Ovary (tissue), 10 donors: ENCODE measurements at regions of chr15 and their contacts with region 1.

Region 1: GRCh38 chr15:68154923-68155559 is 50.1 kb downstream of the CALML4 start:
- DNase-seq: peak in 4 of 5 donors; percentile 35 to 70 (median 52)
- H3K4me3 ChIP-seq: no peak overlapping the region
- H3K27ac ChIP-seq: no peak overlapping the region
- H3K4me1 ChIP-seq: peaks cover 4% of the 10 kb centered on the region
- H3K27me3 ChIP-seq: no peaks in the 10 kb centered on the region
- CTCF ChIP-seq: peak; percentile 55 to 88 (median 82)
- EP300 ChIP-seq: no peak
- POLR2A ChIP-seq: no peak

Region 2: DNA sequence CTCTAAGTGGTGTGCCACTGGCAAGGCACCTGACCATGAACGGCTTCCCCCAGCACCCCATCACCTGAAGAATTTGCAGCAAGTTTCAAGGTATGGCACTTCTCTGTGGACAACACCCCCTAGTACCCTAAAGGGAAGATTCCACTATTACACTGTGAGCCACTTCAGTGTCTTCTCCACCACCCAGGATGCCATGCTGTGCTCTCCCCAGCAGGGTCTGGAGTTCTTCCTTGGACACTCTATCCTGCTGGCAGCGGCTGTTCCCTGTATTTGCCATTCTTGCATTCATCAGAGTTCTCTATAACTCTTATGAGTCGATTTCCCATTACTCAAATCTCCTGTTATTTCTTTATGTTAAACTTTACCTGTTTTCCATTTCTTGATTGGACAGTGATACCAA is 281.3 kb before region 1 on chr15:
- intact Hi-C with region 1: loop called in 1 of 4 experiments (anchors 5 kb)
- DNase-seq: no peak
- H3K4me3 ChIP-seq: no peak overlapping the region
- H3K27ac ChIP-seq: no peak overlapping the region
- H3K4me1 ChIP-seq: no peaks in the 10 kb centered on the region
- H3K27me3 ChIP-seq: no peaks in the 10 kb centered on the region
- CTCF ChIP-seq: no peak
- EP300 ChIP-seq: no peak
- POLR2A ChIP-seq: no peak